Activated CD4-positive, alpha-beta memory T cell treated with anti-CD3 and anti-CD28 coated beads, Interleukin-2, amount 10 ng/mL, durations not matched to agents 7 days and 5 days (primary cell): ENCODE measurements at regions of chr19 and their contacts with region 1.

Region 1: GRCh38 chr19:18117692-18118378 is 20.3 kb downstream of the MAST3 start:
- DNase-seq: peak; percentile 96
- H3K4me3 Mint-ChIP-seq: peak overlapping the region; percentile 79
- H3K27ac Mint-ChIP-seq: peak overlapping the region; percentile 90
- H3K4me1 Mint-ChIP-seq: peaks cover 40% of the 10 kb centered on the region
- H3K27me3 Mint-ChIP-seq: no peaks in the 10 kb centered on the region

Region 2: DNA sequence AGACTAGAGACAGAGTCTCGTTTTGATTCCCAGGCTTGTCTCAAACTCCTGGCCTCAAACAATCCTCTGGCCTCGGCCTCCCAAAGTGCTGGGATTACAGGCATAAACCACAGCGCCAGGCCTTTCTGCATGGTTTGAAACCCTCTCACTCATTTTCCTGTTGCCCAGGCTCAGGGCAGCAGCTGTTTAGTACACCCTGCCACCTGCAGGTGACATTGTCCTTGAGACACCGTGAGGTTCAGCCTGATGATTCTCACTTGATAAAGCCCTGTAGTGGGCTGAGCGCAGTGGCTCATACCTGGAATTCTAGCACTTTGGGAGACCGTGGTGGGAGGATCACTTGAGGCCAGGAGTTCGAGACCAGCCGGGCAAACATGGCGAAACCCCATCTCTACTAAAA is 43.6 kb before region 1 on chr19:
- CTCF ChIA-PET with region 1: no interaction called
- POLR2A ChIA-PET with region 1: no interaction called
- DNase-seq: no peak
- H3K4me3 Mint-ChIP-seq: no peak overlapping the region
- H3K27ac Mint-ChIP-seq: peak overlapping the region; percentile 6
- H3K4me1 Mint-ChIP-seq: peaks cover 16% of the 10 kb centered on the region
- H3K27me3 Mint-ChIP-seq: no peaks in the 10 kb centered on the region

Region 3: DNA sequence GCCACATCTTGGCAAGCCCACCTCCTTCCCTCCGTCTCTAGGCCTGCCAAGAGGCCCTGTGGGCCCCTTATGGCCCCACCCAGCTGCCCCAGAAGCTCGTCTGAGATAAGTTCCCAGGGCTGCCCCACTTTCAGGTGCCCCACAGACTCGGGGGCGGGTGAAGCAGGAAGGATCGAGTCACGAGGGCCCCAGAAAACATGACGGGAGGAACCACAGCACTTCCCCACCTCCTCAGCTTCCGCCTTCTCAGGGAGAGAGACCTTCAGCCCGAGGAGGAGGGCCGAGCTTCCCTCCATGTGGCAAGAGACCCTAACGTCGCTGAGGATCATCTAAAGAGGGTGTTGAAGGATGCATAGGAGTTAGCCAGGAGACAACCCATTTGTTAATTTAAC is 26.6 kb before region 1 on chr19:
- CTCF ChIA-PET with region 1: interaction called, 6 read pairs
- POLR2A ChIA-PET with region 1: interaction called, 12 read pairs
- DNase-seq: peak; percentile 88
- H3K4me3 Mint-ChIP-seq: peak overlapping the region; percentile 15
- H3K27ac Mint-ChIP-seq: peak overlapping the region; percentile 98
- H3K4me1 Mint-ChIP-seq: peaks cover 64% of the 10 kb centered on the region
- H3K27me3 Mint-ChIP-seq: no peaks in the 10 kb centered on the region

Region 4: GRCh38 chr19:18128044-18128443 is 10.2 kb after region 1 on chr19:
- CTCF ChIA-PET with region 1: interaction called, 8 read pairs
- POLR2A ChIA-PET with region 1: interaction called, 15 read pairs
- DNase-seq: peak; percentile 64
- H3K4me3 Mint-ChIP-seq: no peak overlapping the region
- H3K27ac Mint-ChIP-seq: peak overlapping the region; percentile 79
- H3K4me1 Mint-ChIP-seq: peaks cover 11% of the 10 kb centered on the region
- H3K27me3 Mint-ChIP-seq: no peaks in the 10 kb centered on the region

Region 5: DNA sequence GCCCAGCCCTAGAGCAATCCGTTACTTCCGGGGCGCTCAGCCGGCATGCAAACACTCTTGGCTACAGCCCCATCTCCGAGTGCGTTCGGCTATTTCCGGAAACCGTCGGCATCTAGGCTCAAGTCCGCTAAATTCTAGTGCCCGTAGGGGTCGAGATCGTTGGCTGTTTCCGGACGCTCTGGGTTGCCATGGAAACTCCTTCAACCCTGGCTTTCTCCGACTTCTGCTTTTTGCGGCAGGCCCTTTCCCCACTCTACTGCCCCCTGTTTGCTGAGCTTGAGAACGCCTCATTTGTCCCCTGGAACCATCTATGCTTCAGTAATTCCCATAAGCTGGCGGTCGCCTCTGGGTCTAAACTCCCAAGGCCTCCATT is 34.6 kb after region 1 on chr19:
- CTCF ChIA-PET with region 1: interaction called, 23 read pairs
- POLR2A ChIA-PET with region 1: interaction called, 28 read pairs
- DNase-seq: peak; percentile 99
- H3K4me3 Mint-ChIP-seq: peak overlapping the region; percentile 77
- H3K27ac Mint-ChIP-seq: peak overlapping the region; percentile 98
- H3K4me1 Mint-ChIP-seq: peaks cover 43% of the 10 kb centered on the region
- H3K27me3 Mint-ChIP-seq: no peaks in the 10 kb centered on the region

Region 6: DNA sequence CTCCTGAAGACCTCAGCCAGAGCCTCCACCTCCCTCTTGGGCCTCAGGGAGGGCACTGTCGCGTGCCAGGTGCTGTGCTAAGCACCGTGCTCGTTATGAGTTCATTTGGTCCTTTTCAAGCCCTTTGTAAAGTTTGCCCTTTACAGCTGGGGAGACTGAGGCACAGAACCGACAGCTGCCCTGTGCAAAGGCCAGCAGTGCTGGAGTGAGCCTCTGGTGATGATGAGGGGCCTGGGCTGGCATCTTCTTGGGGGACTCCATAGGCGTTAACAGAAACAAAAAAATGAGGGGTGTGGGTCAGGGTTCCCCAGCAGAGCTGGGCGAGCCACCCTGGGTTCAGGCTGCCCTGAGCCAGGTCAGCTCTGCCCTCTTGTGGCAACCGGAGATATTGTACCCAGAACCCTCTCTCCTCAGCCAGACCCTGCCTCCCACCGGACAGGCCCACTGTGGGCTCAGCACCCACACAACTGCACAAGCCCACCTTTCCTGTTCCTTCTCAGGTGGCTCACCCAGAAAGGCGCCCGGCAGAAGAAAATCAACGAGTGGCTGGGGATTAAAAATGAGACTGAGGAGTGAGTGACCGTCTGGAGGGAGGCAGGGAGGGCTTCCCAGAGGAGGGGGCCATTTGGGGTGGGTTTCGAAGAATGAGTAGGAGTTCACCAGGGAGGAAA is 50.3 kb after region 1 on chr19:
- CTCF ChIA-PET with region 1: interaction called, 27 read pairs
- POLR2A ChIA-PET with region 1: no interaction called
- DNase-seq: peak; percentile 74
- H3K4me3 Mint-ChIP-seq: no peak overlapping the region
- H3K27ac Mint-ChIP-seq: no peak overlapping the region
- H3K4me1 Mint-ChIP-seq: peaks cover 4% of the 10 kb centered on the region
- H3K27me3 Mint-ChIP-seq: no peaks in the 10 kb centered on the region